Calu3 (cell line): ENCODE measurements at regions of chr5 and their contacts with region 1.

Region 1: DNA sequence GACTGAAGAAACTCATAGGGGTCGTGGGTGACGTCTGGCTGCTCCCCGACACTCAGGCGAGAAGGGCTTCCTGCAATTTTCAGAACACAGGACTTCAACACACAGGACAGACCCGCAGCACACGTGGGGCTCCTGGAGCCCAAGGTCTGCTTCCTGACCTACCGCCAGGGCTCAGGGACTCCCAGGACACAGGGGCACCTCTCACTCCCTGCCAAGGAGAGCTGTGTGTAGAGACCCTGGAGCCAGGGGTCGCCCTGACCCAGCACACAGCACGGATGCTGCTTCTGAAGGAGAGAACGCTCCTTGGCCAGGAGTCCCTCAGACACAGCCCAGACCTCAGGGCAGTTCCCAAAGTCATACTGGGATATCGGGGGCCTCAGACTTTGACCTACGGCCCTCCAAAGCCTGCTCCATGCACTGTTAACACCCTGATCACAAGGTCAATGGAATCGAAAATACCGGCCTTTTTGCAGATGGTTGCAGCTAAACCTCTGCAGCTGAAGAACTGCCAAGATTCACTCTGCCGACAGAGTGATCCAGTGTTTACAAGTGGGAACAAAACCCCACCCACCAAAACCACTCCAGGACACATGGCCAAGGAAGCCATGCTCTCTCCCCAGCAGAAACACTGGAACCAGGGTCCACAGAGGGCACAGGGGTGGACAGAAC is 13.8 kb upstream of the ZDHHC11 start:
- DNase-seq: no peak
- H3K4me3 Mint-ChIP-seq: no peak overlapping the region
- H3K27ac Mint-ChIP-seq: no peak overlapping the region
- H3K4me1 Mint-ChIP-seq: no peaks in the 10 kb centered on the region
- H3K27me3 Mint-ChIP-seq: no peaks in the 10 kb centered on the region
- CTCF ChIP-seq: no peak

Region 2: GRCh38 chr5:377331-377981 is 487.2 kb before region 1 on chr5:
- CTCF ChIA-PET with region 1: interaction called, 10 read pairs
- intact Hi-C with region 1: no loop called
- DNase-seq: no peak
- H3K4me3 Mint-ChIP-seq: no peak overlapping the region
- H3K27ac Mint-ChIP-seq: no peak overlapping the region
- H3K4me1 Mint-ChIP-seq: peaks cover 3% of the 10 kb centered on the region
- H3K27me3 Mint-ChIP-seq: no peaks in the 10 kb centered on the region
- CTCF ChIP-seq: no peak

Region 3: DNA sequence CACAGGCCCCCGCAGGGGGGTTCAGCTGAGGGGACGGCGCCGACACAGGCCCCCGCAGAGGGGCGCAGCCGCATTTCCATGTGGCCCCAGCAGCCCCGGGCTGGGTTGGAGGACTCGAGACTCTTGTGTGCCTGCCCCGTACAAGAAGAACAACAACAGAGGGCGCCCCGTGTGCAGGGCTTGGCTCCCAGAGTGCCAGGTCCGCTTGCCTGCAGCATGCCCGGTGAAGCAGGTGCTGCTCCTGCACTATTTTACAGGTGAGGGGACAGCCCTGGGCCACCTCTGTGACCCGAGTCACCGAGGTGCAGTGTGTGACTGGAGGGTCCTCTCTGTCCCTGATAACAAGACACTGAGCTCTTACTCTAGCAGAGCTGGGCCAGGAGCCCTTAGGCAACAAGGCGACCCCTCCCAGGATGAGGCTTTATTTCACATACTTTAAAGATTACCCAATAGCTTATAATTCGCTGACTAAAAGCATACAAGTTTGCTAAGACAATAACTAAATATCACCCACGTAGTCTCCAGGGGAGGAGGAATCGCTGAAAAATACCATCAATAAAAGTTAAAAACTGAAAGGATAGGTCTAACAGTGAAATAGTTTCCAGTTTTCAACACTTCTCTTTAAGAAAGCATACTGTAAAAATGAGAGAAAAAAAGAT is 298.7 kb before region 1 on chr5:
- CTCF ChIA-PET with region 1: no interaction called
- intact Hi-C with region 1: no loop called
- DNase-seq: no peak
- H3K4me3 Mint-ChIP-seq: no peak overlapping the region
- H3K27ac Mint-ChIP-seq: no peak overlapping the region
- H3K4me1 Mint-ChIP-seq: no peaks in the 10 kb centered on the region
- H3K27me3 Mint-ChIP-seq: peaks cover 40% of the 10 kb centered on the region
- CTCF ChIP-seq: no peak